Heart right ventricle (tissue), 16 donors: ENCODE measurements at regions of chr17 and their contacts with region 1.

Region 1: DNA sequence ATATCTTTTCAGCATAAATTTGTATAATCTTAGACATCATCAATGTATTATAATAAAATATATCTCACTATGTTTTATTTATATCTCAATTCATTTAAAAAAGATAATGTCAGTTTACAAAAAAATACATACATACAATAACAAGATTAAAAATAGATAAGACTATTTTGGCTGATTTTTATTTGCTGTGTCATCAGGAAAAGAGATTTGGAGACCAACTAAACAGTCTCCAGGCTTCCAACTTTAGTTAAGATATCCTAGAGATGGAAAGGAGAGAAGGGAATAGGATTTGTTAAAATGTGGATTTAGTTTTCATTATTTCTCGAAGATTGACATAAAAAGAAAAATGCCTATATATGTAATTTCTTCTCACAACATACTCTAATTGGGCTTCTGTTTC is 433.8 kb upstream of the TOM1L1 start:
- DNase-seq: no peak
- ATAC-seq: no peak
- H3K4me3 ChIP-seq: no peak overlapping the region
- H3K27ac ChIP-seq: no peak overlapping the region
- H3K4me1 ChIP-seq: no peaks in the 10 kb centered on the region
- H3K27me3 ChIP-seq: no peaks in the 10 kb centered on the region
- CTCF ChIP-seq: no peak

Region 2: DNA sequence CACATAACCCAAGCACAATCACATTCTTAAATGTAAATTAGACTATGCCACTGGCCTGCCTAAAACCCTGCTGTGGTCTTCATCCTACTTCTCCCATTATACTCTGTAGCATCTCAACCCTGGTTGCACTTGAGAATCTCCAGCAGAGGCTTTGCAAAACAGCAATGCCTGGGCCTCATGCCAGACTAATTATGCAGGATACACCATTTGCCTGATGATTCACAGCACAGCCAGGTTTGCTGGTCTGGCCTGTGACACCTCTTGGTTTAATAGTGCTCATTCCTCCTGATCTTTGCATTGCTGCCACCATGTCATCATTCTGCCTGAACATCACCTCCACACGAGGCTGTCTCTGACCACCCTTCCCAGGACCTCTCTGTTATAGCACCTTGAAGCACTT is 58.1 kb before region 1 on chr17:
- intact Hi-C with region 1: loop called in 1 of 10 experiments (anchors 10 kb)
- DNase-seq: no peak
- ATAC-seq: no peak
- H3K4me3 ChIP-seq: no peak overlapping the region
- H3K27ac ChIP-seq: no peak overlapping the region
- H3K4me1 ChIP-seq: no peaks in the 10 kb centered on the region
- H3K27me3 ChIP-seq: no peaks in the 10 kb centered on the region
- CTCF ChIP-seq: no peak